Dorsolateral prefrontal cortex (tissue), 120 donors: ENCODE measurements at regions of chr1 and their contacts with region 1.

Region 1: GRCh38 chr1:58903514-58904298 is 119.9 kb upstream of the JUN start:
- DNase-seq: peak; percentile 66 to 90 (median 84)
- H3K4me3 ChIP-seq: peak overlapping the region; percentile 32 to 88 (median 69)
- H3K27ac ChIP-seq: peak overlapping the region; percentile 81 to 99 (median 96)
- H3K27me3 ChIP-seq: no peaks in the 10 kb centered on the region
- CTCF ChIP-seq: peak in 31 of 56 donors; percentile 3 to 56 (median 26)

Region 2: GRCh38 chr1:58816072-58816746 is 87.5 kb before region 1 on chr1:
- intact Hi-C with region 1: loop called in 1 of 2 experiments (anchors 1 kb)
- DNase-seq: peak; percentile 73 to 90 (median 84)
- H3K4me3 ChIP-seq: peak overlapping the region; percentile 33 to 82 (median 68)
- H3K27ac ChIP-seq: peak overlapping the region; percentile 10 to 96 (median 85)
- H3K27me3 ChIP-seq: no peaks in the 10 kb centered on the region
- CTCF ChIP-seq: peak in 41 of 56 donors; percentile 7 to 61 (median 36)

Region 3: DNA sequence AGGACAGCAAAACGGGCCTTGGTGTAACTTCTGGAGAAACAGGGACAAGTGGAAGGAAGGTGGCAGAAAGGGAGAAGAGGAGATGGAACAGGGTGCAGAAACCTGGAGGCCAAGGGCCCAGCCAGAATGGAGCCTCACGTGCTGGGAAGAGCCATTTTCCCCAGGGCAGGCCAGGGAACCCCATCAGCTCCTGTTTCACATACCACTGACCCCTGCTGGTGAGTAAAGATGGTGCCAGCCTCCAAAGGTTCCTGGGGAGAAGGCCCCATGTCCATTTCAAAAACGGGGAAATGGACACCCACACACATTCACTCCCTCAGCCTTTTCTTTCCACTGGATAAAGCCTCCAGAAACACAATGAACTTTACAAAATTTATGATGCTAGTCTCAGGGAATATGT is 62.3 kb before region 1 on chr1:
- intact Hi-C with region 1: no loop called
- DNase-seq: no peak
- H3K4me3 ChIP-seq: no peak overlapping the region
- H3K27ac ChIP-seq: no peak overlapping the region
- H3K27me3 ChIP-seq: no peaks in the 10 kb centered on the region
- CTCF ChIP-seq: peak in 43 of 56 donors; percentile 8 to 48 (median 28)

Region 4: DNA sequence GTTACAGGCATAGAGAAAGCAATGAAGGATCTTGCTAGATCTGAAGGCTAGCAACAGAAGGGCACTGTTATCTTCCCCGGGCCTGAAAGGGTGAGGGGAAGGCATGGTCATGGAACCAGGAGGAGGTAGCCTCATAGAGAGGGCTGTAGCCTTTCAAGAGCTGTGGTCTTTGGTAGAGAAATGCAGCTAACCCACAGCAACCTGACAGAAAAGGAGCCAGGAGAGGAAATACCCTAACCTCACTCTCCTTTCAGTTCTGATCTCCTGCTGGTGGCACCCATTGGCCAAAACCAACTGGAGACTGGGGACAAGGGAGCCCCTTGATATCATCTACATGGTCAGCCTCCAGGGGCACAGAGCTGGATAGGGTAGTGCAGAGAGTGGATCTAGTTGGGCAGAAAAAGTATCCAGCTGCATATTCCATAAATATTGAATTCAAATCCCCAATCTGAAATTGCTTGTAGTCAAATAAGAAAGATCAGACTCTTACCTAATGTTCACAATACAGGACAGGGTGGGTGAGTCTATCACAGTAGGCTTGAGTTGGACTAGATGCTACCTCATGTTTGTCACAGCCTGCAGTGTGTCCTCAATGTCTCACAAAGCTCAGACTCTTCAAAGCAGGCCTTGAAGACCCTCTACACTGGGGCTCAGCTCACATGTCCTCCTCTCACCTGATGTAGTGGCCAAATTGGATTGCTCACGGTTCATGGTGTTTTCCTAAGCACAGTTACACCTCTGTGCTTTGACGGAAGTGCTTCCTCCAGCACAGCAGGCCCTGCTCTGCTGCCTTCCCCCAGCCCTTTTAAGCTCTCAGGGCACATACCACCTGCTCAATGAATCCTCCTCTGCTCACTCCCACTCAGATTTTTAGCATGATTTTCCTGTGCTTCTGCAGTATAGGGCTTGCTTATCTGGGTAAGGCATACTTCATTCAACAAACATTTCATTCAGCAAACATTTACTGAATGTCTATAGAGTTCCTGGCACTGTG is 45.7 kb before region 1 on chr1:
- intact Hi-C with region 1: loop called in 1 of 2 experiments (anchors 5 kb)
- DNase-seq: no peak
- H3K4me3 ChIP-seq: no peak overlapping the region
- H3K27ac ChIP-seq: peak overlapping the region in 12 of 59 donors; percentile 1 to 67 (median 12)
- H3K27me3 ChIP-seq: no peaks in the 10 kb centered on the region
- CTCF ChIP-seq: no peak

Region 5: DNA sequence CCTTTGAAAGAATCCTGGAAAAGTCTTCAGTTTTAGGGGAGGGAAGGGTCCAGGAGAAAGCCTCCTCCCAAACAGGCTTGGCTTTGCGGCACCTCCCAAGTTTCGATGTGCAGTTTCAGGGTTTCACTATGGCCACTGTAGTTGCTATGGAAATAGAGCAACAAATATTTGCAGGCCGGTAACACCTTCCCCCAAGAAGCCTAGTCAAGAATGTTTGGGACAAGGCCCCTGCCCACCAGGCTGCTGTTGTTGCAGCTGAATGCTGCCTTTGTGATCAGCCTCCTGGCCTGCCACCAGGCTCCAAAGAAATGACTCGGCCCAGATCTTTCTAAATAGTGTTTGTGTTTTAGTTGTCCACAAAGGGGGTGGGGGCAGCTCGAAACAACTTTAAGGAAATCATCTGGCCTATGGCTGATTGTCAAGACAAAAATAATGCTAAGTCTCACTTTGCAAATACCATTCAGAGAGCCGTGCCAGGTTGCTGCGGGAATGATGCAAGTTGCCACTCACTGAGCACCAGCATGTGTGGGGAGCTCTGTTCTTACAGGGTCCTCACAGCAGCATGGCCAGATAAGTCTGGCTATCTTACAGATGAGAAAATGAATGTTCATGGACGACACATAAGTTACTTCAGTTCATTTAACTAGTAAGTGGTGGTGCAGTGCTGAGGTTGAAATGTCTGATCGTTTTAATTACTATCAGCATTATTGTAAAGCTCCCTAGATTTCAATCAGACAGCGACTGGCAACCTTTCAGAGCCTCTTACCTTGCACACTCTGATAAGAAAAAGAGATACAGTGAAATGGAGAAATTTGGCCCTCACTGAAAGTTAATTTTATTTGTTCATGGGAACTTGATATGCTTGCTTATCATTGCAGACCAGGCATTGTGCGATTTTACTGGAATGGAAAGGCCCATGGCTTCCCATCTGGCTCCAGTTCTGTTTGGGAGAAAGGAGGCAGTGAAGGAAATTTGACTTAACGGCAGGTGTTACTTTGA is 28.6 kb before region 1 on chr1:
- intact Hi-C with region 1: loop called in 1 of 2 experiments (anchors 1 kb)
- DNase-seq: peak in 9 of 10 donors; percentile 41 to 79 (median 73)
- H3K4me3 ChIP-seq: peak overlapping the region in 19 of 59 donors; percentile 2 to 37 (median 23)
- H3K27ac ChIP-seq: peak overlapping the region in 58 of 59 donors; percentile 4 to 93 (median 82)
- H3K27me3 ChIP-seq: no peaks in the 10 kb centered on the region
- CTCF ChIP-seq: peak in 4 of 56 donors; percentile 9 to 40 (median 27)

Region 6: DNA sequence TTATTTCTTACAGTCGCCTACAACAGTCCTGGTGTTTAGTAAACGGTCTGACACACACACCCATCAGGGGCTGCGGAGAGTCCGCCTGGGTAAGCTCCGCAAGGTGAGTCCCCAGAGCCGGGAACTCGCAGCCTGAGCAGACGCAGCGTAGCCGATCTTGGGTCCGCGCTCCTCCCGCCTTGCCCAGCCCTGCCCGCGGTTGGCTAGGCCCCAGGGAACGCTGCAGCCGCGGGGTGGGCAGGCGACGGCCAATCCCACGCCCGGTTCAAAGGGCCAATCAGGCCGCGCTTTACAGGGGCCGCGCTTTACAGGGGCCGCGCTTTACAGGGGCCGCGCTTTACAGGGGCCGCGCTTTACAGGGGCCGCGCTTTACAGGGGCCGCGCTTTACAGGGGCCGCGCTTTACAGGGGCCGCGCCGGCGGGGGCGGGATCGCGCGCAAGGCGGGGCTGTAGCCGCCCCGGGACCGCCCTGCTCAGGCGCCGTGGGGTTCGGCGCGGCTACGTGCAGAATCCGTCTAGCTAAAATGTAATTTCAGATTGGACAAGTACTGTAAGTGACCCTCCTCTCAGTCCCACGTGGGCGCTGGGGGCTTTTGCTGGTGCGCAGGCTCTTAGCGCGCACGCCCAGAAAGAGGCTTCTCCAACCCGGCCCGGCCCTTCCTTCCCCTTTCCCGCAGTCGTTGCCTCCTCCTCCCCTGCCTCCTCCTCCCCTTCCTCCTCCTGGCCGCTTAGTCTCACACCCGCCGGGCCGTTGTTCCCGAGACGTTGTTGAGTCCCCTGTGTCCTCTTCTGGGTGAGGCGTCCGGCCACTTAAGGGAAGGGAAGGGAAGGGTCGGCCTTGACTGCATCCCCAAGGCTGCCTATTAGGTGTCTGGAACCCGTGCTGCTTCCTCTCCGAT is 392.9 kb after region 1 on chr1 and contains the start of gene FGGY:
- intact Hi-C with region 1: loop called in 1 of 2 experiments (anchors 5 kb)
- DNase-seq: peak; percentile 82 to 97 (median 94)
- H3K4me3 ChIP-seq: peak within 1 kb of the TSS; percentile 32 to 86 (median 68)
- H3K27ac ChIP-seq: peak within 1 kb of the TSS; percentile 39 to 99 (median 96)
- H3K27me3 ChIP-seq: no peaks in the 10 kb centered on the region
- CTCF ChIP-seq: peak in 14 of 56 donors; percentile 2 to 41 (median 16)
- total RNA-seq, gene FGGY: 23.4 to 68.4 (median 36.5) TPM

Region 7: DNA sequence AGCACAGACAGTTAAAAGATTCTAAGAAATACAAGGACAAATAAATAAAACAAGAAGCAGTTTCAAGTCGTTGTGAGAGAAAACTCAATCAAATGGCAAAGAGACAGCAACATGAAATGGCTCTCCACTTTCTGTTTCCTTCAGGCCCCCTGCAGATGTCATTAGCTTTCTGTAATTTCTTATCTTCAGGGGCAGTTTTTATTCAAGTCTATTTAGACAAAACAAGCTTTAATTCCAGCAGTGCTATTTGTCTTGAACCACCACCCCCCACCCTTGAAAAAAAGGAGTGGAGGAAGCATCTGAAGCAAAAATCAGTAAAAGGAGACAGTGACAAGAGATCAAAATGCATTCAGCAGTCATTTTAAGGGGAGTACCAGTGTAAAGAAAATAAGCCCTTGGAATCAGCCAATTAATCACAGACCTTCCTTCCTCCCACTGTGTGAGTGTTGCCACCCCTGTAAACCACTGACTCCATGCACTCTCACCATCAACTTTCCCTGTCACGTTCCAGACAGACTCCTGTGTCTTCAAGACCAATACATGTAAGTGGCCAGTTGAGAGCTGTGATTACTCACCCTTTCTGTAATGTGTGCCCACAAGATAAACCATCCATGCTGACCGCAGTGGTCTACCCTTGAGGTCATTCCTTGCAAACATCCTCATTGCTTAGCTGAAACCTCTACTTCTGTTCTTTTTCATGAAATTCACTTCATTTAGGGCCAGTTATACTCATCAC is 775.0 kb after region 1 on chr1:
- intact Hi-C with region 1: loop called in 1 of 2 experiments (anchors 10 kb)
- DNase-seq: no peak
- H3K4me3 ChIP-seq: no peak overlapping the region
- H3K27ac ChIP-seq: no peak overlapping the region
- H3K27me3 ChIP-seq: no peaks in the 10 kb centered on the region
- CTCF ChIP-seq: no peak

Region 8: DNA sequence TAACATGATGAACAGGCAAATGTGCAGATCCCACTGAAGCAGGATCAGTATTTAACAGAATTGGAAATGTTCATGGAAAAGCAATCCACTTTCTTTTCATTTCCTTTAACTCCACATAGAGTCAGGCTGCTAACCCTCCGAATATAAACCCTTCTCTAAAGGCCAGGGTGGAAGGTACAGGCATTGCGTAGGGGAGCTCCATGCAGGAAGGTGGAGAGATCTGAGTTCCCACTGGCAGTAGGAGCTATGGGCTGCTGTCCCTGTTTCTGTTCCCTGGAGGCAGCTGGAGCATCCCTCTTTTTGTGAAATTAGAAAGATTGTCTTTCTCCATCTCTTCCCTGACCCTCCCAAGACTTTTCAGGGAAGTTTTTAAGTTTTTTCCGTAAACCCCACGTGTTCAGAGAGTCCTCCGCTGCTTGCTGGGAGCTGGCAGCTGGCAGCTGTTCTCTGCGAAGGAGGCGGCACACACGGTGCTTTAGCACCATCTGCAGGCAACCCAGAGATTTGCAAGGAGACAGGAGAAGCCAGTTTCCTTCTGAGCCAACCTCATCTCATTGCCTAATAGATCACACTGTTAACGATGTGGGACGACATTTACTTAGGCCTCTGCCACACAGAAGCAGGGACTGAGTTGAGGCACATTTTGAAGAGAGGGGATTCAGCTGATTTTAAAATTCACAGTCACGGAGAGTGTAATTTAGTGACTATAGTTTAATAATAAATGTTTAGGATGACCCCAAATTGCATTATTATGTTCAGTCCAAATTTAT is 855.6 kb after region 1 on chr1:
- intact Hi-C with region 1: loop called in 1 of 2 experiments (anchors 10 kb)
- DNase-seq: peak; percentile 62 to 88 (median 82)
- H3K4me3 ChIP-seq: peak overlapping the region in 45 of 59 donors; percentile 3 to 59 (median 35)
- H3K27ac ChIP-seq: peak overlapping the region in 9 of 59 donors; percentile 8 to 59 (median 30)
- H3K27me3 ChIP-seq: no peaks in the 10 kb centered on the region
- CTCF ChIP-seq: peak; percentile 68 to 100 (median 96)